Mammary epithelial cell (primary cell): ENCODE measurements at regions of chr17 and their contacts with region 1.

Region 1: DNA sequence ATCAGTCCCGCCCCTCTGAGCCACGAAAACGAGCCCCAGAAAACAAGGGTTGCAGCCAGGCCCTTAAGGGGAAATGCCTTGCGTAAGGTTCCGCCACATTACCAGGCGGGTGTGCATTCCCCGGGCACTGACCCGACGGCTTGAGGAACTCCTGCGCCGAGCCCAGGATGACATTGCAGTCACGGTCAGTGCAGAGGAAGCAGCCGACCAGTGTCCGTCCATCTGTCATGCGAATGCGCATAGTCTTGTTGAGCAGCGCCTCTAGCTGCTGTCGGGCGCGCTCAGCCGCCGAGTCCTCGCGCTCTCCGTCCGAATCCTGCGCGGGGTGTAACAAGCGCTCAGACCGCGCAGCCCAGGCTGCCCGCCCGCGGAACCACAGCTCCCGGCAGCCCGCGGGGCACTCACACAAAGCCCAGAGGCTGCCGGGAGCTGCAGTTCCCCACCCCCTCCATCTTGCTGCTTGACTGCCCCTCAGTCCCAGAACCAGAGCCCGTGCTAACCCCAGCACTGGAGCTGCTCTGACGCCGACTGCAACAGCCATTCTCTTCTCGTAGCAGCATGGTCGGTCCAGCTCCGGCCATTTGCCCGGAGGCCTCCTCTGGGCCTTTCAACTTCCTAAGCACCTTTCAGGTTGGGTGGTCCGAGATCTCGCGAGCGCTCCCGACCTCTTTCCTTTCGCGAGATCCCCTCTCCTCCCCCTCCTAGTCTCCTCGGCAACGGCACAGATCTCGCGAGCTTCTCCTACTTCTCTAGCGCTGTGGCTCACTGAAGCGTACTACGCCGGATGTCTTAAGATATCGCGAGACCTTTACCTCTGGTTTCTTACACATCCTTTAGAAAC is at the start of gene NAA38:
- DNase-seq: peak; percentile 99
- H3K4me3 ChIP-seq: peak within 1 kb of the TSS; percentile 58 to 85 (median 77)
- H3K27ac ChIP-seq: peak within 1 kb of the TSS; percentile 92
- H3K4me1 ChIP-seq: peaks cover 40% of the 10 kb centered on the region
- H3K27me3 ChIP-seq: no peaks in the 10 kb centered on the region
- CTCF ChIP-seq: peak; percentile 9 to 58
- total RNA-seq, gene NAA38: 28.2 to 81.5 TPM

Region 2: DNA sequence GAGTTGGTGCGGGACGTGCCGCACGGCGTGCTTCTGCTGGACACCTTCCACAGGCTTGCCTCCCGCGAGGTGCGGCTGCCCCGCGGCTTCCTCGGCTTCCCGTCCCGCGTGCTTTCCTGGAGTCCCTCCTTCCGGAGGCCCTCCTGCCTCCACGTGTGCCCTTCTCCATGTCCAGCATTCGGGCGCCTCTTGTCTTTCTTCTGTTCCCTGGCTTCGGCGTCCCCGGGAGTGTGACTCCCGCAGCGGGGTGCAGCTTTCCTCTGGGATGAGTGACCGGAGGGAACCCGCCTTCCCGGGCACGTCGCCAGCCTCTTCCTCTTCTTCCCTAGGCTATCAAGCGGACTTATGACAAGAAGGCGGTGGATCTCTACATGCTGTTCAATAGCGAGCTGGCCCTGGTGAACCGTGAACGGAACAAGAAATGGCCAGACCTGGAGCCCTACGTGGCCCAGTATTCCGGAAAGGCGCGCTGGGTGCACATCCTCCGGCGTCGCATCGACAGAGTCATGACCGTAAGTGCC is 116.6 kb before region 1 on chr17:
- CTCF ChIA-PET with region 1: no interaction called
- dilution Hi-C with region 1: no loop called
- in situ Hi-C with region 1: loop called in 1 of 2 experiments (anchors 10 kb)
- intact Hi-C with region 1: loop called (anchors 1 kb)
- DNase-seq: no peak
- H3K4me3 ChIP-seq: no peak overlapping the region
- H3K27ac ChIP-seq: no peak overlapping the region
- H3K4me1 ChIP-seq: peaks cover under 1% of the 10 kb centered on the region
- H3K27me3 ChIP-seq: peaks cover 3% of the 10 kb centered on the region
- CTCF ChIP-seq: no peak

Region 3: DNA sequence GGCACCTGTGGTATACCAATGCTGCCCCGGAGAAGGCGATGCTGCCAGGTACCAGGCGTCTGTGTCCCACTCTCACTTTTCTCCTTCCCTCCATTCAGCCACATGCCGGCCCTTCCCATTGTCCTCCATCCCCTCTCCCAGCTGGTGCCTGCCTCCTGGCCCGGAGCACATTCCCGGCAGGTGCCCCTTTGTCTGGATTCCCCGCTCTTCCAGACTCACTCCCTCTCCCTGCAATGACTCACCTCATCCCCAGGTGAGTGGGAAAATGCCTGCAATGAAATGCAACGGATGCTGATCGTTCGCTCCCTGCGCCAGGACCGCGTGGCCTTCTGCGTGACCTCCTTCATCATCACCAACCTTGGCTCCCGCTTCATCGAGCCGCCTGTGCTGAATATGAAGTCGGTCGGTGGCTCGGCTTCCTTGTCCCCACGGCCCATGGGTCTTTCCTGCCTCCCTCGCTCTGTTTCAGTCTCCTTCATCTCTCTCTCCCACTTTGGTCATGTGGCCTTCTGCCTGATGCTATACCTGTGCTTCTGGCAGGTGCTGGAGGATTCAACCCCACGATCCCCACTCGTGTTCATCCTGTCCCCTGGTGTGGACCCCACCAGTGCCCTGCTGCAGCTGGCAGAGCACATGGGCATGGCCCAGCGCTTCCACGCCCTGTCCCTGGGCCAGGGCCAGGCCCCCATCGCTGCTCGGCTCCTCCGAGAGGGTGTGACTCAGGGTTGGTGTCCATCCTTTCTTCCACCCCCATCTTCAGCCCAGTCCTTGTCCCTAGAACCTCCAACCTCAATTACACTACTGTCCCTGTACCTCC is 33.3 kb before region 1 on chr17:
- CTCF ChIA-PET with region 1: interaction called, 4 read pairs
- dilution Hi-C with region 1: no loop called
- in situ Hi-C with region 1: no loop called
- intact Hi-C with region 1: loop called (anchors 1 kb)
- DNase-seq: no peak
- H3K4me3 ChIP-seq: no peak overlapping the region
- H3K27ac ChIP-seq: no peak overlapping the region
- H3K4me1 ChIP-seq: peaks cover 4% of the 10 kb centered on the region
- H3K27me3 ChIP-seq: no peaks in the 10 kb centered on the region
- CTCF ChIP-seq: no peak

Region 4: GRCh38 chr17:7844292-7845154 is 12.6 kb before region 1 on chr17:
- CTCF ChIA-PET with region 1: no interaction called
- dilution Hi-C with region 1: no loop called
- in situ Hi-C with region 1: no loop called
- intact Hi-C with region 1: loop called (anchors 1 kb)
- DNase-seq: peak; percentile 94
- H3K4me3 ChIP-seq: peak overlapping the region; percentile 60 to 75 (median 71)
- H3K27ac ChIP-seq: peak overlapping the region; percentile 96
- H3K4me1 ChIP-seq: peaks cover 26% of the 10 kb centered on the region
- H3K27me3 ChIP-seq: no peaks in the 10 kb centered on the region
- CTCF ChIP-seq: no peak

Region 5: GRCh38 chr17:7881276-7882054 is 24.4 kb after region 1 on chr17:
- CTCF ChIA-PET with region 1: no interaction called
- dilution Hi-C with region 1: no loop called
- in situ Hi-C with region 1: no loop called
- intact Hi-C with region 1: no loop called
- DNase-seq: no peak
- H3K4me3 ChIP-seq: no peak overlapping the region
- H3K27ac ChIP-seq: no peak overlapping the region
- H3K4me1 ChIP-seq: peaks cover 15% of the 10 kb centered on the region
- H3K27me3 ChIP-seq: no peaks in the 10 kb centered on the region
- CTCF ChIP-seq: no peak

Region 6: GRCh38 chr17:7989781-7990655 is 132.9 kb after region 1 on chr17:
- CTCF ChIA-PET with region 1: no interaction called
- dilution Hi-C with region 1: no loop called
- in situ Hi-C with region 1: no loop called
- intact Hi-C with region 1: loop called (anchors 1 kb)
- DNase-seq: peak; percentile 65
- H3K4me3 ChIP-seq: peak overlapping the region; percentile 55 to 76 (median 55)
- H3K27ac ChIP-seq: peak overlapping the region; percentile 26
- H3K4me1 ChIP-seq: peaks cover 21% of the 10 kb centered on the region
- H3K27me3 ChIP-seq: no peaks in the 10 kb centered on the region
- CTCF ChIP-seq: peak; percentile 85 to 96